Naive thymus-derived CD4-positive, alpha-beta T cell (primary cell): ENCODE measurements at regions of chr20 and their contacts with region 1.

Region 1: GRCh38 chr20:50958615-50959542 is at the start of gene MOCS3:
- DNase-seq: peak; percentile 57 to 95 (median 91)
- ATAC-seq: peak; percentile 86
- H3K4me3 ChIP-seq: peak within 1 kb of the TSS; percentile 93
- H3K4me3 Mint-ChIP-seq: peak within 1 kb of the TSS; percentile 92 to 99 (median 98)
- H3K27ac ChIP-seq: peak within 1 kb of the TSS; percentile 93
- H3K27ac Mint-ChIP-seq: peak within 1 kb of the TSS; percentile 97 to 100 (median 100)
- H3K4me1 ChIP-seq: peaks cover 22 to 25% of the 10 kb centered on the region in 2 donors
- H3K4me1 Mint-ChIP-seq: peaks cover 25 to 78% (median 66%) of the 10 kb centered on the region in 7 donors
- H3K27me3 ChIP-seq: no peaks in the 10 kb centered on the region
- H3K27me3 Mint-ChIP-seq: peaks cover 0 to 2% (median 0%) of the 10 kb centered on the region in 5 donors
- total RNA-seq, gene MOCS3: 2.5 to 8.9 (median 5.2) TPM

Region 2: DNA sequence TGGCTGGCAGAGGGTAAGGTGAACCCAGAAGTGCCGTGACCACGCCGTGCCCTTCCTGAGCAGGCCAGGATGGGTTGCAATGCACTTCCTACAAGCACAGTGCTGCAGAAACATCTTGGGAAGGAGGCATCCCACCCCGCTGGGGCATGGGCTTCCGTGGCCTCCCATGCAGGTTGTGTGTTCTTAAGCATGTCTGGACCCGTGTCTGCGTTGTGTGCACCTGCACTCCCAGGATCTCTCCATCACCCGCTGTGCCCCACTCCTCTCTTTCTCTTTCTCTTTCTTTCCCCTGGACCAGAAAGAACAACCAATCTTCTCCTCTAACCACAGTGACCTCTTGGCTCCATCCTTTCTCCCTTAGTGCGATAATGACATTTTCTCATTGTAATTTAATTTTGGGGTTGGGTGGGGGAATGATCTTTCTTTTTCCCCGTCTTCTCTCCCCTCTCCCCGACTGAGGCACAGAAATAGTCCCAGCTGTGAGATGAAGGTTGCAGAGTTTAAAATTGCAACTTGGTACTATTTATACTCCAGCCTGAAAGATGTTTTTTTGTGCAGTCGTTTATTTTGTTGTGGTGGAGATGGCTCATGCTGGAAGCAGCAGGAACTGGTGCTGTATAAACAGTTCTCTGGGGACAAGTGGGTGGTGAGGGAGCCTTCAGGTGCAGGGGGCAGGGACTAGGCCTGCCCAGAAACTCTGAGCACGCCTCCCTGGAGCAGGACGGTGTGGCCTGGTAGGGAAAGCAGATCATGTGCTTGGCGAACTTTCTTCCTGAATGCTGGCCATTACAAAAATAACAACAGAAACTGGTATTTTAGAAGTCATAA is 143.5 kb before region 1 on chr20:
- CTCF ChIA-PET with region 1: no interaction called
- POLR2A ChIA-PET with region 1: interaction called, 15 read pairs
- intact Hi-C with region 1: loop called (anchors 1 kb)
- DNase-seq: peak in 1 of 9 donors; percentile 6
- ATAC-seq: peak; percentile 24
- H3K4me3 ChIP-seq: peak overlapping the region; percentile 25
- H3K4me3 Mint-ChIP-seq: peak overlapping the region; percentile 60 to 93 (median 80)
- H3K27ac ChIP-seq: peak overlapping the region; percentile 43
- H3K27ac Mint-ChIP-seq: peak overlapping the region; percentile 75 to 98 (median 87)
- H3K4me1 ChIP-seq: peaks cover 11 to 37% of the 10 kb centered on the region in 2 donors
- H3K4me1 Mint-ChIP-seq: peaks cover 34 to 70% (median 52%) of the 10 kb centered on the region in 7 donors
- H3K27me3 ChIP-seq: no peaks in the 10 kb centered on the region
- H3K27me3 Mint-ChIP-seq: no peaks in the 10 kb centered on the region

Region 3: GRCh38 chr20:50943069-50943468 is 15.8 kb before region 1 on chr20:
- CTCF ChIA-PET with region 1: interaction called, 6 read pairs
- POLR2A ChIA-PET with region 1: interaction called, 15 read pairs
- intact Hi-C with region 1: no loop called
- DNase-seq: no peak
- ATAC-seq: peak; percentile 44
- H3K4me3 ChIP-seq: no peak overlapping the region
- H3K4me3 Mint-ChIP-seq: no peak overlapping the region
- H3K27ac ChIP-seq: no peak overlapping the region
- H3K27ac Mint-ChIP-seq: peak overlapping the region in 2 of 9 donors; percentile 12 to 33
- H3K4me1 ChIP-seq: no peaks in the 10 kb centered on the region
- H3K4me1 Mint-ChIP-seq: peaks cover 0 to 5% (median 0%) of the 10 kb centered on the region in 7 donors
- H3K27me3 ChIP-seq: no peaks in the 10 kb centered on the region
- H3K27me3 Mint-ChIP-seq: no peaks in the 10 kb centered on the region

Region 4: GRCh38 chr20:50948132-50948785 is 10.6 kb before region 1 on chr20:
- CTCF ChIA-PET with region 1: no interaction called
- POLR2A ChIA-PET with region 1: interaction called, 15 read pairs
- intact Hi-C with region 1: no loop called
- DNase-seq: no peak
- ATAC-seq: no peak
- H3K4me3 ChIP-seq: no peak overlapping the region
- H3K4me3 Mint-ChIP-seq: no peak overlapping the region
- H3K27ac ChIP-seq: no peak overlapping the region
- H3K27ac Mint-ChIP-seq: peak overlapping the region in 1 of 9 donors; percentile 42
- H3K4me1 ChIP-seq: no peaks in the 10 kb centered on the region
- H3K4me1 Mint-ChIP-seq: peaks cover 3 to 21% (median 12%) of the 10 kb centered on the region in 7 donors
- H3K27me3 ChIP-seq: no peaks in the 10 kb centered on the region
- H3K27me3 Mint-ChIP-seq: no peaks in the 10 kb centered on the region

Region 5: DNA sequence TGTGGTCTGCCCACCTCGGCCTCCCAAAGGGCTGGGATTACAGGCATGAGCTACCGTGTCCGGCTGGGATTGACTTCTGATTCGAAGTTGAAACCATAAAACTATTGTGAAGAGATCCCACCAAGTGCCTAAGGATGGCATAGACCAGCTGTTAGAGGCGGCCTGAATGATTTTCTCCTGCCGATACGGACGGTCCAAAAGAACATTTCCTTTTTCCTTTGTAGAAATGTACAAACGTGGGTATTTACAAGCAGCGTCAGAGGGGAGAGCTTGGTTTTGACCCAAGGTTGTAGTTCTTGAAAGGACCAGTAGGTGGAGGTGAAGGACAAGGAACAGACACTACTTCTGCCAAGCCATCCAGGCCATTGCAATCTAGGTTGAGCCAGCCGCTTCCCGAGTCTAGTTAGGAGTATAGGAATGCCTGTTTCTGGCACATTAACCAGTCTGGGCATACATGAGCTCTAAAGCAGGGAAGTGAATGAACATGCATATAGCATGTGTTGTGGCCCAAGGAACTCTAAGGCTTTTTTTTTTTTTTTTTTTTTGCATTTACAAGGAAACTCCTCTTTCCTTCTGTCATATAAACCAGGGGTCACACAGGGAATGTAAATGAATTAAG is 28.8 kb after region 1 on chr20:
- CTCF ChIA-PET with region 1: no interaction called
- POLR2A ChIA-PET with region 1: no interaction called
- intact Hi-C with region 1: no loop called
- DNase-seq: peak; percentile 23 to 77 (median 66)
- ATAC-seq: peak; percentile 92
- H3K4me3 ChIP-seq: no peak overlapping the region
- H3K4me3 Mint-ChIP-seq: no peak overlapping the region
- H3K27ac ChIP-seq: no peak overlapping the region
- H3K27ac Mint-ChIP-seq: peak overlapping the region in 1 of 9 donors; percentile 43
- H3K4me1 ChIP-seq: no peaks in the 10 kb centered on the region
- H3K4me1 Mint-ChIP-seq: peaks cover 0 to 6% (median 0%) of the 10 kb centered on the region in 7 donors
- H3K27me3 ChIP-seq: peaks cover 0 to 3% of the 10 kb centered on the region in 2 donors
- H3K27me3 Mint-ChIP-seq: peaks cover 18 to 31% (median 25%) of the 10 kb centered on the region in 5 donors